Activated CD4-positive, alpha-beta memory T cell treated with anti-CD3 and anti-CD28 coated beads for 36 hours (primary cell): ENCODE measurements at regions of chr17 and their contacts with region 1.

Region 1: DNA sequence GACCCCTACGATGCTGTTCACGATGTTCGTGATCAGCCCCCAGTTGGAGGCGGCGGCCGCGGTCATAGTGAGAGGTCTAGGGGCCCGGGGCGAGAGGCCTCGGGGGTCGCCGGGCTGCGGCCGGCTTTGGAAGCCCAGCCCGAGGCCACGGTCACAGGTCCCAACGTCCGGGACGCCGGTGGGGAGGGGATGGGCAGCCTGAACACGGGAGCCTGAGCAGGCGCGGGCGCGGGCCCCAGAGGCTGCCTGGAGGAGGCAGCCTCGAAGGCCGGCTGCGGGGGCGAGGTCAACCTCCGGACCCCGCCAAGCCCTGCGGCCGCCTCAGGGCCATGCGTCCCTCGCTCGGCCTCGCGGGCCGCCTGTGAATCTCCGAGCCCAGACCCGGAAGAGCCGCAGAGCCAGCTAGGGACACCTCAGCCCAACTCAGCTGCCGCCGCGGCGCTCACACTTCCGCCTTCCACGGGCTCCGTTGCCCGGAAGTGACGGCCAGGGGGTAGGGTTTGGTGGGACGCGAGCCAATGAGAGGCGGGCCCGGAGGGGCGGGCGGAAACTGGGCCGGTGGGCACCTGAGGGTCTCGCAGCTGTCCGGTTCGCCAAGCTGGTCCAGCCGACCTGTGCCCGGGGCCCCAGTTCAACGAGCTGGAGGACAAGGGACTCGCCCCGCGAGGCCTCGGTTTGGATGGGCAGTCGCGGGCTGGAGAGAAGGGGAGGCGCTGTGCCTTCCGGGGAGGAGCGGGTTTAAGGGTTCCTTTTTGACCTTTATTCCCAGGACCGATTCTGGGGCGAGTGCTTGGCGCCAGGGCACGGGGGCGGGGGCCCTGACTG is at the start of gene SLC38A10:
- DNase-seq: peak; percentile 95
- H3K4me3 Mint-ChIP-seq: peak within 1 kb of the TSS; percentile 94
- H3K27ac Mint-ChIP-seq: peak within 1 kb of the TSS; percentile 92
- H3K4me1 Mint-ChIP-seq: peaks cover 39% of the 10 kb centered on the region
- H3K27me3 Mint-ChIP-seq: no peaks in the 10 kb centered on the region
- total RNA-seq, gene SLC38A10: 60.7 to 60.9 TPM

Region 2: GRCh38 chr17:81253358-81254131 is 41.5 kb before region 1 on chr17:
- CTCF ChIA-PET with region 1: interaction called, 4 read pairs
- POLR2A ChIA-PET with region 1: no interaction called
- intact Hi-C with region 1: loop called (anchors 2 kb)
- DNase-seq: peak; percentile 65
- H3K4me3 Mint-ChIP-seq: no peak overlapping the region
- H3K27ac Mint-ChIP-seq: no peak overlapping the region
- H3K4me1 Mint-ChIP-seq: peaks cover 3% of the 10 kb centered on the region
- H3K27me3 Mint-ChIP-seq: no peaks in the 10 kb centered on the region